Cardiac septum (tissue), 1 donor: ENCODE measurements at regions of chr15 and their contacts with region 1.

Region 1: DNA sequence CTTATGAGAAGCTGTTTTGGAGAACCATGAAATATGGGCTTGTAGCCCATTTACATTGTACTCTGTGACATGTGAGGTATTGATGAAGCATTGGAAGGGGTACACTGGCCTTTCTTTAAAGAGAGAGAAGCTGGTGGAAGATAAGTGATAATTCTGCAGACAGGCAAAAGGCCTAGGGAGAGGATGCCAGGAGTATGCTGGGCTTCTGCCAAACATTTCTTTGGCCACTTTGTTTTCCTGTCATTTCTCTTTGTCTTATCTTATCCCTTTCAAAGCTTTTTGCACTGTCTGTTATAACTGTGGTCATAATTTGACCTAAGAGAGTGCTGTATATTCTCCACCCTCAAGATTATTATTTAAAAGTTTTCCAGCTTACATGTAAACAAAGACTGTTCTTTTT is 109.6 kb upstream of the SEMA6D start:
- DNase-seq: no peak

Region 2: GRCh38 chr15:47514211-47514652 is 93.5 kb before region 1 on chr15:
- intact Hi-C with region 1: loop called (anchors 5 kb)
- DNase-seq: no peak